ENCODE measurements at regions of chr9 and their contacts with region 1.

Region 1: GRCh38 chr9:129487642-129488409 is 133.1 kb downstream of the C9orf50 start:
- DNase-seq: peak; percentile 66 to 77 (median 72)
- ATAC-seq: peak; percentile 38
- H3K4me3 ChIP-seq: peak overlapping the region; percentile 67
- H3K27ac ChIP-seq: peak overlapping the region; percentile 100
- H3K4me1 ChIP-seq: peaks cover 71 to 84% of the 10 kb centered on the region in 2 experiments
- H3K27me3 ChIP-seq: no peaks in the 10 kb centered on the region
- CTCF ChIP-seq: no peak
- EP300 ChIP-seq: no peak
- POLR2A ChIP-seq: peak; percentile 17
- RAD21 ChIP-seq: no peak

Region 2: GRCh38 chr9:129284373-129285291 is 203.2 kb before region 1 on chr9:
- CTCF ChIA-PET with region 1: no interaction called
- POLR2A ChIA-PET with region 1: no interaction called
- in situ Hi-C with region 1: no loop called
- intact Hi-C with region 1: no loop called
- DNase-seq: peak in 1 of 4 experiments; percentile 4
- ATAC-seq: no peak
- H3K4me3 ChIP-seq: no peak overlapping the region
- H3K27ac ChIP-seq: no peak overlapping the region
- H3K4me1 ChIP-seq: peaks cover 0 to 33% of the 10 kb centered on the region in 2 experiments; a peak in 3 of 5 replicates
- H3K27me3 ChIP-seq: no peaks in the 10 kb centered on the region
- CTCF ChIP-seq: no peak
- EP300 ChIP-seq: no peak
- POLR2A ChIP-seq: no peak
- RAD21 ChIP-seq: no peak

Region 3: GRCh38 chr9:129406278-129407225 is 81.3 kb before region 1 on chr9:
- CTCF ChIA-PET with region 1: interaction called, 4 read pairs
- POLR2A ChIA-PET with region 1: no interaction called
- in situ Hi-C with region 1: loop called (anchors 5 kb)
- intact Hi-C with region 1: loop called (anchors 5 kb)
- DNase-seq: peak; percentile 94 to 96 (median 94)
- ATAC-seq: peak; percentile 97
- H3K4me3 ChIP-seq: peak overlapping the region; percentile 31
- H3K27ac ChIP-seq: peak overlapping the region; percentile 79
- H3K4me1 ChIP-seq: peaks cover 57 to 75% of the 10 kb centered on the region in 2 experiments
- H3K27me3 ChIP-seq: no peaks in the 10 kb centered on the region
- CTCF ChIP-seq: 0 out of 6 replicates have a peak, but pooled peaks of 1 of the 3 experiments have one; percentile 4
- EP300 ChIP-seq: peak; percentile 57
- POLR2A ChIP-seq: peak; percentile 86
- RAD21 ChIP-seq: 0 out of 4 replicates have a peak, but pooled peaks of 1 of the 2 experiments have one; percentile 7

Region 4: GRCh38 chr9:129569502-129570449 is 82.0 kb after region 1 on chr9:
- CTCF ChIA-PET with region 1: no interaction called
- POLR2A ChIA-PET with region 1: interaction called, 3 read pairs
- in situ Hi-C with region 1: no loop called
- intact Hi-C with region 1: loop called (anchors 2 kb)
- DNase-seq: peak; percentile 55 to 65 (median 60)
- ATAC-seq: peak; percentile 75
- H3K4me3 ChIP-seq: no peak overlapping the region
- H3K27ac ChIP-seq: peak overlapping the region; percentile 85
- H3K4me1 ChIP-seq: peaks cover 27 to 43% of the 10 kb centered on the region in 2 experiments
- H3K27me3 ChIP-seq: no peaks in the 10 kb centered on the region
- CTCF ChIP-seq: peak; percentile 54 to 69 (median 60)
- EP300 ChIP-seq: no peak
- POLR2A ChIP-seq: no peak
- RAD21 ChIP-seq: peak in 1 of 2 experiments; percentile 56; a peak in 2 of 4 replicates

Region 5: DNA sequence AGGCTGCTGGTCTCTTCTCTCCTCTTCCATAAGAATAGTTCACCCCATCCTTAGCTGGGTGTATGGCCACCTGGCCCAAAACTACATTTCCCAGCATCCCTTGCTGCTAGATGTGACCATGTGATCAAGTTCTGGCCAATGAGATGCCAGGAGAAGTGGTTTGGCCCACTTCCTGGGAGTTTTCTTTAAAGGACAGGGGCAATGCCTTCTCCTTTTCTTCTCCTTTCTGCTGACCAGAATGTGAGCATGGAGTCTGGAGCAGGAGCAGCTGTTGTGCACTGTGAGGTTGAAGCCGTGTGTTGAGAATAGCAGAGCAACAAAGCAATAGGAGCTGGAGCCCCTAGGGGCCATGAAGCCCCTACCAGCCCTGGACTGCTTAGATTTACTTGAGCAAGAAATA is 96.3 kb after region 1 on chr9:
- CTCF ChIA-PET with region 1: no interaction called
- POLR2A ChIA-PET with region 1: no interaction called
- in situ Hi-C with region 1: no loop called
- intact Hi-C with region 1: loop called (anchors 5 kb)
- DNase-seq: peak; percentile 90 to 92 (median 91)
- ATAC-seq: peak; percentile 84
- H3K4me3 ChIP-seq: no peak overlapping the region
- H3K27ac ChIP-seq: peak overlapping the region; percentile 51
- H3K4me1 ChIP-seq: peaks cover 26 to 35% of the 10 kb centered on the region in 2 experiments
- H3K27me3 ChIP-seq: no peaks in the 10 kb centered on the region
- CTCF ChIP-seq: no peak
- EP300 ChIP-seq: no peak
- POLR2A ChIP-seq: no peak
- RAD21 ChIP-seq: no peak

Measured in K562 (cell line).